ENCODE measurements at regions of chr10 and their contacts with region 1.

Region 1: GRCh38 chr10:83691836-83692539 is 447.3 kb upstream of the GHITM start:
- DNase-seq: peak; percentile 46
- H3K4me3 Mint-ChIP-seq: no peak overlapping the region
- H3K27ac Mint-ChIP-seq: no peak overlapping the region
- H3K4me1 Mint-ChIP-seq: peaks cover 6% of the 10 kb centered on the region
- H3K27me3 Mint-ChIP-seq: no peaks in the 10 kb centered on the region
- CTCF ChIP-seq: no peak

Region 2: DNA sequence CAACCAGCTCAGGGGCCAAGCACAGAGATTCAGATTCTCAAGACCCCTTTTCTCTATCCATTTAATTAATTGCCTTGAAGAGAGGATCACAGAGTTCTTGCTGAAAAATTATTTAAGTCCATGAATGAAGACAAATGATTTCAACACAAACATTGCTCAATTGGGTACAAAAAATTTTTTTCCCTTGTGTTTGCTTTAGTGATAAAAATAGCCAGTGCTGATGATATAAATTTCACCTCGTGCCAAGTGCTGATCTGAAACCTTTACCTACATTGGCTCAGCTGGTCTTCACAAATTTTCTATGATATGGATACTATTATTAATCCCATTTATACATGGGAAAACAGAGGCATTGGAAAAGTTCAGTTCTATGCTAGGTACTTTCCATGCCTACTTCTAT is 1439.9 kb before region 1 on chr10:
- CTCF ChIA-PET with region 1: no interaction called
- POLR2A ChIA-PET with region 1: no interaction called
- intact Hi-C with region 1: loop called (anchors 10 kb)
- DNase-seq: peak; percentile 68
- H3K4me3 Mint-ChIP-seq: no peak overlapping the region
- H3K27ac Mint-ChIP-seq: no peak overlapping the region
- H3K4me1 Mint-ChIP-seq: peaks cover 30% of the 10 kb centered on the region
- H3K27me3 Mint-ChIP-seq: no peaks in the 10 kb centered on the region
- CTCF ChIP-seq: no peak